Calu3 (cell line): ENCODE measurements at regions of chr6 and their contacts with region 1.

Region 1: DNA sequence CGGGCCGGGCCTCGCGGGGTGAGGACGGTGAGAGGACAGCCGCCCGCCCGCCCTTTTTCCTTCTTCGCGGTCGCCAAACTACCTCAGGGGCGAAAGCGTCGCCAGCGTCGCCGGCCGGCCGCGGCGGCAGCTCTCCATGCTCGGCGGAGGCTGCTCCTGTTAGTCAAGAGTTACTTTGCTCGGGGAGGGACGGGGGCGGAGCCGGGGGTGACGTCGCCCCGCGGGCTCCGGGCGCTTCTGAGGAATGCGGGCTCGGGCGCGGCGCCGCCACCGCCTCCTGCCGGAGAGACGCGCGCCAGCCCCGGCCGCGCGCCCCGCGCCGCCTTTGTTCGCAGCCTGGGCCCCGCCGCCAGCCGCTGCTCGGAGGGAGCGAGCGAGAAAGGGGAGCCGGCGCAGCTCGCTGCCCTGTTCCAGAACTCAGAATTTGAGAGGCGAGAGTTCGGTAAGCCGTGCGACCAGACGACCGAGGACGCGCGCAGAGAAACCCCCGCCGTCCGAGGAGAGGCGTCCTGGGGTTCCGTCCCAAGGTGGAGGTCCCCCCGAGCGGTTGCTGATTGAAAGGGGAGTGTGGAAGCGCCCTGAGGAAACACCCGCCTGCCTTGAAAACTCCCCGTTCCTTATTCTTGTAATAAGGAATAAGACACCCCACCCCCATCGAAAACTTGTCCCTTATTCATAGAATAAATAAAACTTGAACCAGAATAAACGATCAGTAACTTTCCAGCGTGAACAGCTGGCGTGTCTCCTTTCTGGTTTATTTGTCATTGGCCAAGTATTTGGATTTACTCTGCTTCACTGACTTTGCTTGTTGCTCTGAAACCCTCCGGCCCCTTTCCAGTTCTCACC is at the start of gene PTPRK:
- DNase-seq: peak; percentile 96
- H3K4me3 Mint-ChIP-seq: peak within 1 kb of the TSS; percentile 100
- H3K27ac Mint-ChIP-seq: peak within 1 kb of the TSS; percentile 88
- H3K4me1 Mint-ChIP-seq: peaks cover 16% of the 10 kb centered on the region
- H3K27me3 Mint-ChIP-seq: no peaks in the 10 kb centered on the region
- CTCF ChIP-seq: peak; percentile 51
- total RNA-seq, gene PTPRK: 201 and 265 TPM in 2 replicates

Region 2: GRCh38 chr6:127737009-127737486 is 783.6 kb before region 1 on chr6:
- CTCF ChIA-PET with region 1: no interaction called
- intact Hi-C with region 1: loop called (anchors 10 kb)
- DNase-seq: peak; percentile 50
- H3K4me3 Mint-ChIP-seq: no peak overlapping the region
- H3K27ac Mint-ChIP-seq: no peak overlapping the region
- H3K4me1 Mint-ChIP-seq: no peaks in the 10 kb centered on the region
- H3K27me3 Mint-ChIP-seq: no peaks in the 10 kb centered on the region
- CTCF ChIP-seq: peak; percentile 63

Region 3: DNA sequence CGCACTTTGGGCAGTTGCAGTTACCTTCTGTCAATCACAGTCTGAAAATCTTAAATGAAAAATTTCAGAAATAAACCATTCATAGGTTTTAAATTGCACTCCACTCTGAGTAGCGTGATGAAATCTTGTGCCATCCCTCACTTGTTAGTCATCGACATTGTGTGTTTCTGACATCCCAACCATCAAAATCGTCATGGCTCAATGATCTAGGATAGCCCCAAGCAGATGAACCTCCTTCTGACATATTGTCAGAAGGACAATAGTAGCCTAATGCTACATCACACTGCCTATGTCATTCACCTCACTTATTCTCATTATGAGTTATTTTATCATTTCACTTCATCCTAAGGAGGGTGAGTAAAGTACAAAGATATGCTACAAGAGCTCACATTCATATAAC is 285.1 kb before region 1 on chr6:
- CTCF ChIA-PET with region 1: no interaction called
- intact Hi-C with region 1: loop called (anchors 10 kb)
- DNase-seq: no peak
- H3K4me3 Mint-ChIP-seq: no peak overlapping the region
- H3K27ac Mint-ChIP-seq: no peak overlapping the region
- H3K4me1 Mint-ChIP-seq: peaks cover 30% of the 10 kb centered on the region
- H3K27me3 Mint-ChIP-seq: no peaks in the 10 kb centered on the region
- CTCF ChIP-seq: no peak

Region 4: DNA sequence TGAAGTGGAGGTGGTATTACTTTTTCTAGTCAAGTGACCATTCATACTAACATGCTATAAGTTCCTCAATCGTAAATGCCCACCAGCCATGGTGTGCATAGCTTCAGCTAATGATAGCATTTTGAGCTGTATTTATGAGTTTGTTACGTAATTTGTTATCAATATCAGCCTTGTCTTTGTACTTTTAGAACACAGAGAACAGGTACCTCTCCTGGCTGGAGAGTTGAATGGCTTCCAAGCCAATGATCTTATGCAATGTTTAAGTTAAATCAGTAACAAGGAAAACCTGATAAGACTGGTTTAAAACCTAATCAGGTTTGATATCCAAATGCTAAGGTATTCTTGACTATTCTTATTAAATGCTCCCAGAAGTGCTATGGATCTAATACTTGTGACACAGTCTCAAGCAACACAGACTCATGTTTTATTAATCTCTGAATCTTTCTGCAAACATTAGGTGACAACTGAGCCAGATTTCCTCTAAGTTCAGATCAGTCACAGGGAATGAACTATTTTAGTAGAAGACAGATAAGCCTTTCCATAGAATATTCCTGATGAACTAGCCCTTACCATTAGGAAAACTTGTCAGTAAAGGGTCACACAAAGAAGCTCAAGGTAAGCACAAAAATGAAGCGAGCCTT is 155.0 kb before region 1 on chr6:
- CTCF ChIA-PET with region 1: interaction called, 3 read pairs
- intact Hi-C with region 1: loop called (anchors 2 kb)
- DNase-seq: peak; percentile 21
- H3K4me3 Mint-ChIP-seq: peak overlapping the region; percentile 17
- H3K27ac Mint-ChIP-seq: peak overlapping the region; percentile 72
- H3K4me1 Mint-ChIP-seq: peaks cover 68% of the 10 kb centered on the region
- H3K27me3 Mint-ChIP-seq: no peaks in the 10 kb centered on the region
- CTCF ChIP-seq: no peak

Region 5: GRCh38 chr6:128491610-128492206 is 29.0 kb before region 1 on chr6:
- CTCF ChIA-PET with region 1: interaction called, 8 read pairs
- intact Hi-C with region 1: loop called (anchors 2 kb)
- DNase-seq: no peak
- H3K4me3 Mint-ChIP-seq: peak overlapping the region; percentile 59
- H3K27ac Mint-ChIP-seq: peak overlapping the region; percentile 99
- H3K4me1 Mint-ChIP-seq: peaks cover 86% of the 10 kb centered on the region
- H3K27me3 Mint-ChIP-seq: no peaks in the 10 kb centered on the region
- CTCF ChIP-seq: no peak

Region 6: GRCh38 chr6:128655978-128656498 is 135.4 kb after region 1 on chr6:
- CTCF ChIA-PET with region 1: no interaction called
- intact Hi-C with region 1: loop called (anchors 5 kb)
- DNase-seq: peak; percentile 33
- H3K4me3 Mint-ChIP-seq: no peak overlapping the region
- H3K27ac Mint-ChIP-seq: peak overlapping the region; percentile 93
- H3K4me1 Mint-ChIP-seq: peaks cover 50% of the 10 kb centered on the region
- H3K27me3 Mint-ChIP-seq: peaks cover 10% of the 10 kb centered on the region
- CTCF ChIP-seq: no peak